Activated CD4-positive, alpha-beta memory T cell treated with anti-CD3 and anti-CD28 coated beads for 36 hours (primary cell): ENCODE measurements at regions of chr12 and their contacts with region 1.

Region 1: GRCh38 chr12:116737774-116738700 is at the starts of genes RNFT2 and SPRING1:
- DNase-seq: peak; percentile 99
- H3K4me3 Mint-ChIP-seq: peak within 1 kb of the TSS; percentile 87
- H3K27ac Mint-ChIP-seq: peak within 1 kb of the TSS; percentile 72
- H3K4me1 Mint-ChIP-seq: peaks cover 31% of the 10 kb centered on the region
- H3K27me3 Mint-ChIP-seq: no peaks in the 10 kb centered on the region
- total RNA-seq, gene RNFT2: 15.8 to 15.9 TPM
- total RNA-seq, gene SPRING1: 20.9 to 24.3 TPM

Region 2: DNA sequence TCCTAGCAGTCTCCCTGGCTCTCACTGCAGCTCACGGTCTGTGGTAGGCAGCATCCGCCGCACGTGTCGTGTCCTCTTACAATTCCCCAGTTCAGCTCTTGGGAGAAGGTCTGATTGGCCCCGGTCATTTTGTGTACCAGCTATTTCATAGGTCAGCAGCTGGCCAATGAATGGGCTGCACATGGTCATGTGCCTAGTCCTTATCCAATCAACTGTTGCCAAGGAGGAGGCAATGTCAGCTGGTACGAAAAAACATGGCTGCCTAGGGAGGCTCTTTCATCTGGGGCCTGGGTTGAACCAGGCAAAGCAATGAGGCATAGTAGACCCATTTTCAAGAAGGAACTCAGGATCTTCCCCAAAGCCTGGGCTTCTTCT is 46.2 kb after region 1 on chr12:
- CTCF ChIA-PET with region 1: no interaction called
- POLR2A ChIA-PET with region 1: no interaction called
- intact Hi-C with region 1: no loop called
- DNase-seq: no peak
- H3K4me3 Mint-ChIP-seq: no peak overlapping the region
- H3K27ac Mint-ChIP-seq: no peak overlapping the region
- H3K4me1 Mint-ChIP-seq: no peaks in the 10 kb centered on the region
- H3K27me3 Mint-ChIP-seq: no peaks in the 10 kb centered on the region

Region 3: DNA sequence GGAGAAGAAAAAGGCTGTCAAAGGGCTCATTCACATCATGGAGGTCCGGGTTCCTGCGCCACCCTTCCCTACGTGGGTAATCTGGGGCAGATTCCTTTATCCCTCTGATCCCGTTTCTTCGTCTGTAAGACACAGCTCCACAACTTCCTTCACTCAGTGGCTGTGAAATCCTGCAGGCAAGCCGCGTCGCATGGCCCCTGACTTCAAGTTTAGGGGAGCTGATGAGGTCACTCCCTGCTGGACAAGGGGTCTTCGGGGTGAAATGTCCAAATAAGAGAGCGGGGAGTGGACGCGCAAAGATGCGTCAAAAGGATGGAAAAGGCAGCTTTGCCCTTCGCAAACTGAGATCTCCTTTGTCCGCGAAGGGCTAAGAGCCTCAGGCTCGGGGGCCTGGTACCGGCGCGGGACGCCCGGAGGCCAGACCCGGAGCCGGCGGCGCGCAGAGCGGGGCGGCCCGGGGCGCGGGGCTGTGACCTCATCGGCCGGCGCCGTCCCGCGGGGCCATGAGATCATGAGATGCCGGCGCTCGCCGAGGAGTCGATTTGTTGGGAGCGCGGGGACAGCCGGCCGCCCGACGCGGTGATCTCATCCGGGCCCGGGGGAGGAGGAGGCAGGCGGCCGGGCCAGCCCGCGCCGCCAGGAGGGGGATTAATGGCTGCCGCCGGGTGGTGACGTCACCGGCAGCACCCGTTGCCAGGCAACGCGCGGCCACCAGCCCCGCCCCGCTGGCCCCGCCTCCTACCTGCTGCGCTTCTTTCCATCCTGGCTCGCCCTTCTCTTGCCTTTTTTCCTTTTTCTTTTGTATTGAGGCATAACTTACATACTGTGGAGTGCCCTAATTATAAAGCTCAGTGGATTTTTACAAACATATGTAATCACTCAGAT is 81.2 kb after region 1 on chr12:
- CTCF ChIA-PET with region 1: interaction called, 4 read pairs
- POLR2A ChIA-PET with region 1: no interaction called
- intact Hi-C with region 1: loop called (anchors 1 kb)
- DNase-seq: peak; percentile 92
- H3K4me3 Mint-ChIP-seq: peak overlapping the region; percentile 93
- H3K27ac Mint-ChIP-seq: peak overlapping the region; percentile 85
- H3K4me1 Mint-ChIP-seq: peaks cover 15% of the 10 kb centered on the region
- H3K27me3 Mint-ChIP-seq: no peaks in the 10 kb centered on the region

Region 4: GRCh38 chr12:116852294-116852693 is 114.3 kb after region 1 on chr12:
- CTCF ChIA-PET with region 1: no interaction called
- POLR2A ChIA-PET with region 1: no interaction called
- intact Hi-C with region 1: no loop called
- DNase-seq: no peak
- H3K4me3 Mint-ChIP-seq: no peak overlapping the region
- H3K27ac Mint-ChIP-seq: no peak overlapping the region
- H3K4me1 Mint-ChIP-seq: no peaks in the 10 kb centered on the region
- H3K27me3 Mint-ChIP-seq: peaks cover 5% of the 10 kb centered on the region

Region 5: GRCh38 chr12:116924558-116925453 is 186.8 kb after region 1 on chr12:
- CTCF ChIA-PET with region 1: no interaction called
- POLR2A ChIA-PET with region 1: no interaction called
- intact Hi-C with region 1: loop called (anchors 1 kb)
- DNase-seq: peak; percentile 58
- H3K4me3 Mint-ChIP-seq: peak overlapping the region; percentile 10
- H3K27ac Mint-ChIP-seq: peak overlapping the region; percentile 40
- H3K4me1 Mint-ChIP-seq: peaks cover 59% of the 10 kb centered on the region
- H3K27me3 Mint-ChIP-seq: peaks cover 6% of the 10 kb centered on the region

Region 6: GRCh38 chr12:116955382-116956021 is 217.5 kb after region 1 on chr12:
- CTCF ChIA-PET with region 1: no interaction called
- POLR2A ChIA-PET with region 1: no interaction called
- intact Hi-C with region 1: loop called (anchors 1 kb)
- DNase-seq: peak; percentile 12
- H3K4me3 Mint-ChIP-seq: no peak overlapping the region
- H3K27ac Mint-ChIP-seq: no peak overlapping the region
- H3K4me1 Mint-ChIP-seq: peaks cover 20% of the 10 kb centered on the region
- H3K27me3 Mint-ChIP-seq: no peaks in the 10 kb centered on the region

Region 7: DNA sequence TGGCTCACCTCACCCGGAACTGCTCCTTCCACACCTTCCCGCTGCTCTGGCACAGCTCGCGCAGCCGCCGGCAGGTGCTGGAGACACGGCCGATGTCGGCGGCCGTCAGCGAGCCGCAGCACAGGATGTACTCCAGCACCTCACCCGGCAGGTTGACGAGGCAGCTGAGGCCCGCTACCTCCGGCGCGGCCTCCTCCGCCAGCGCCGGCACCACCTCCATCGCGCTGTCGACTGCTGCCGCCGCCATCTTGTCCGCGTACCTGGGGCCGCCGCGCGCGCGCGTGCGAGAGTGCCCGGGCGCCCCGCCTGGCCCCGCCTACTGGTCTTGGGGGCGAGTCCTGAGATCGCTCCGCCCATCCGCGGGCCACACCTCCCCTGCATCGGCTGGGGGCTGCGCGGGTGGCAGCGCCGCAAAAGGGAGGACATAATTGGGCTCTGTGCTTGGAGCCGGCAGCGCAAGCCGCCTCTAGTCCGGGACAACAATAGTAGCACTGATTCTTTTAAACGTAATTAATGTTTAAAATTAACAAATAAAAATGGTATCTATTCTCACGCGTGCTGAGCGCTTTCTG is 452.3 kb after region 1 on chr12 and contains the start of gene FBXO21:
- CTCF ChIA-PET with region 1: no interaction called
- POLR2A ChIA-PET with region 1: no interaction called
- intact Hi-C with region 1: loop called (anchors 1 kb)
- DNase-seq: peak; percentile 94
- H3K4me3 Mint-ChIP-seq: peak within 1 kb of the TSS; percentile 89
- H3K27ac Mint-ChIP-seq: peak within 1 kb of the TSS; percentile 73
- H3K4me1 Mint-ChIP-seq: peaks cover 26% of the 10 kb centered on the region
- H3K27me3 Mint-ChIP-seq: no peaks in the 10 kb centered on the region
- total RNA-seq, gene FBXO21: 23.3 to 23.7 TPM